IMR-90 (cell line): ENCODE measurements at regions of chr1 and their contacts with region 1.

Region 1: GRCh38 chr1:213015099-213016050 is at the start of gene ANGEL2:
- DNase-seq: peak; percentile 97
- ATAC-seq: peak; percentile 97
- H3K4me3 ChIP-seq: peak within 1 kb of the TSS; percentile 56
- H3K27ac ChIP-seq: peak within 1 kb of the TSS; percentile 92
- H3K4me1 ChIP-seq: no peaks in the 10 kb centered on the region; the same call in 1 of the 2 replicates
- H3K27me3 ChIP-seq: peaks cover under 1% of the 10 kb centered on the region; the same call in 1 of the 2 replicates
- CTCF ChIP-seq: no peak
- POLR2A ChIP-seq: no peak; the same call in 1 of the 2 replicates
- RAD21 ChIP-seq: no peak
- total RNA-seq, gene ANGEL2: 44.1 and 49.2 TPM in 2 replicates

Region 2: DNA sequence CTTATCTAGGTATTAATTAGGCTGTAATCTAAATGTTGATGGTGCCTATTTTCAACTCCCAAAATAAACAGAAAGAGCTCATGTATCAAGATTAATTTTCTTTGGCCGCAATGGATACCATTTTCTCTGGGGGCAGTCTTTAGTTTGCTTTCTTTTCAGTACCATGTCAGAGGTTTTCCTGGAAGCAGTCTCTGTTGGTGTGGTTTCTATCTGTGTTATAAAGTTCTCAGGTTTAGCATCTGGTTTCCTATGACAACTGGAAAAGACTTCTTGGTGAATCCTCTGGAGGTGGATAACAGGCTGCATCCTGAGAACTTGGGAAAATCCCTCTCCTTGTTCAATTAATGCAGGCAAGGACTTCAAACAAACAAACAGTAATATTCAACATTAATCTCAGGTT is 277.0 kb before region 1 on chr1:
- CTCF ChIA-PET with region 1: no interaction called
- POLR2A ChIA-PET with region 1: no interaction called
- dilution Hi-C with region 1: no loop called
- in situ Hi-C with region 1: no loop called
- intact Hi-C with region 1: no loop called
- DNase-seq: peak; percentile 69
- ATAC-seq: no peak
- H3K4me3 ChIP-seq: no peak overlapping the region
- H3K27ac ChIP-seq: no peak overlapping the region
- H3K4me1 ChIP-seq: no peaks in the 10 kb centered on the region
- H3K27me3 ChIP-seq: no peaks in the 10 kb centered on the region
- CTCF ChIP-seq: no peak
- POLR2A ChIP-seq: no peak
- RAD21 ChIP-seq: no peak

Region 3: DNA sequence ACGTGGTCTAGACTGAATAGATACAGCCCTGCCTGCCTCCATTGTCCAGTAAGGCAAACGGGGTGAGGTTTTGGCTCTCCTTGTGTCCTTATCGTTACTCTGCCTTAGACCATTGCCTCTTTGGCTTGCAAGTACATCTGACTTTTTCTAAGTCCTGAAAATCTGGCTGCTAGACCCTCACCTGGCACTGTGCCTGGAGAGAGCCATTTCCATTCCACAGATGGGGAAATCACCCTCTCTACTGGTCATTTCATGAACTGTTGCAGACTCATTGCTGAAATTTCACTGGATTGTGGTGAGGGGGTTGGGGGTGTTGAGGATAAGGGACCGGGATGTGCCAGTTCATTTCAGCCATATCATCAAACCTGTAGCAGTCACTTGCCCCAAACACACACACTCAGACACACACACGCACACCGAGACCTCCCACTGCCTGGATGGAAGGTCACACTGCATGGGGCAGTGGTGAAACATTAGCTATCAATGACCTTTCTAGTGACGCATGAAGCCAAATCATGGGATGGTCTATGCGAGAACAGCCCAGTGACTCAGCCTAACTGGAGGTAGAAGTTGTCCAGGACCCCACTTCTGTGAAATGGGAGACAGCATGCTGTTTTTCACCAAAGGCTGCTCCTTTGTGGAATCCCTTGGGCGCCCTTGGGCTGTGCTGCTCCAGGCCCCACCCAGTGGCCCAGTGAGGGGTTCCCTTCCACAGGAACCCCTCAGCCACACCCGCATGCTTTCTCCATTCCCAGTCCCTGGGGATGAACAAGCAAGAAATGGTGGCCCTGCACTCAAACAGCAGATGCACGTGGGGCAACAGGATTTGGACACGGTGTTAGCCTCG is 99.9 kb before region 1 on chr1:
- CTCF ChIA-PET with region 1: no interaction called
- POLR2A ChIA-PET with region 1: no interaction called
- dilution Hi-C with region 1: no loop called
- in situ Hi-C with region 1: no loop called
- intact Hi-C with region 1: no loop called
- DNase-seq: peak; percentile 87
- ATAC-seq: peak; percentile 56
- H3K4me3 ChIP-seq: no peak overlapping the region
- H3K27ac ChIP-seq: no peak overlapping the region; the same call in 1 of the 2 replicates
- H3K4me1 ChIP-seq: peaks cover 9% of the 10 kb centered on the region; the same call in 1 of the 2 replicates
- H3K27me3 ChIP-seq: peaks cover 7% of the 10 kb centered on the region; the same call in 1 of the 2 replicates
- CTCF ChIP-seq: peak; percentile 52
- POLR2A ChIP-seq: no peak
- RAD21 ChIP-seq: peak; percentile 46; the same call in 1 of the 2 replicates

Region 4: GRCh38 chr1:213051127-213051880 is 35.9 kb after region 1 on chr1 and contains the start of gene RPS6KC1:
- CTCF ChIA-PET with region 1: interaction called, 3 read pairs
- POLR2A ChIA-PET with region 1: no interaction called
- dilution Hi-C with region 1: no loop called
- in situ Hi-C with region 1: no loop called
- intact Hi-C with region 1: loop called (anchors 5 kb)
- DNase-seq: peak; percentile 75
- ATAC-seq: peak; percentile 98
- H3K4me3 ChIP-seq: peak within 1 kb of the TSS; percentile 85
- H3K27ac ChIP-seq: peak within 1 kb of the TSS; percentile 88
- H3K4me1 ChIP-seq: peaks cover 2% of the 10 kb centered on the region; the same call in 1 of the 2 replicates
- H3K27me3 ChIP-seq: no peaks in the 10 kb centered on the region
- CTCF ChIP-seq: no peak
- POLR2A ChIP-seq: no peak
- RAD21 ChIP-seq: no peak
- total RNA-seq, gene RPS6KC1: 23.7 and 25.8 TPM in 2 replicates

Region 5: GRCh38 chr1:213070406-213070805 is 55.0 kb after region 1 on chr1:
- CTCF ChIA-PET with region 1: no interaction called
- POLR2A ChIA-PET with region 1: no interaction called
- dilution Hi-C with region 1: no loop called
- in situ Hi-C with region 1: no loop called
- intact Hi-C with region 1: loop called (anchors 5 kb)
- DNase-seq: peak; percentile 86
- ATAC-seq: peak; percentile 94
- H3K4me3 ChIP-seq: peak overlapping the region; percentile 16; the same call in 1 of the 2 replicates
- H3K27ac ChIP-seq: no peak overlapping the region
- H3K4me1 ChIP-seq: no peaks in the 10 kb centered on the region
- H3K27me3 ChIP-seq: no peaks in the 10 kb centered on the region
- CTCF ChIP-seq: peak; percentile 43
- POLR2A ChIP-seq: no peak
- RAD21 ChIP-seq: peak; percentile 53

Region 6: DNA sequence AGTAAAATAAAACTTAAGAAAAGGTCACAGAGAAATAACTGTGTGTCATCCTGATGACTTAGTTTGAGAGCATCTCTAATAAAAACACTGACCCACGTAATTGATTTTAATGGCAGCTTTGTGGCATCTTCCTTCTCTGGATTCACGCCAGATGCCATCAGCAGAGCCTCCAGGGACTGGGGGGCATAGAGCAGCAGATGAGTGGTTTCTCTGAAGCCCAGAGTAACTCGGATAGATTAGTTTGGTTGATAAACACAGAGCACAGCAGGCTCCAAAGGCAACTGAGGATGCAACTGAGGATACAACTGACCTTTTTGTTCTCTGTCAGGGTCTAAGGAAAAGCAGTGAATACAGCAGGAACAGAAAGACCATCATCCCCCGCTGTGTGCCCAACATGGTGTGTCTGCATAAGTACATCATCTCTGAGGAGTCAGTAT is 216.4 kb after region 1 on chr1:
- CTCF ChIA-PET with region 1: no interaction called
- POLR2A ChIA-PET with region 1: no interaction called
- dilution Hi-C with region 1: no loop called
- in situ Hi-C with region 1: no loop called
- intact Hi-C with region 1: no loop called
- DNase-seq: peak; percentile 48
- ATAC-seq: peak; percentile 62
- H3K4me3 ChIP-seq: no peak overlapping the region
- H3K27ac ChIP-seq: peak overlapping the region; percentile 45
- H3K4me1 ChIP-seq: peaks cover 4% of the 10 kb centered on the region
- H3K27me3 ChIP-seq: no peaks in the 10 kb centered on the region
- CTCF ChIP-seq: no peak
- POLR2A ChIP-seq: no peak
- RAD21 ChIP-seq: no peak